ENCODE measurements at regions of chr11 and their contacts with region 1.

Region 1: GRCh38 chr11:14578541-14578956 is 58.4 kb upstream of the PSMA1 start:
- DNase-seq: peak in 8 of 9 donors; percentile 57 to 95 (median 92)
- ATAC-seq: peak; percentile 99
- H3K4me3 ChIP-seq: peak overlapping the region; percentile 22
- H3K4me3 Mint-ChIP-seq: peak overlapping the region; percentile 40 to 85 (median 62)
- H3K27ac ChIP-seq: peak overlapping the region; percentile 79
- H3K27ac Mint-ChIP-seq: peak overlapping the region; percentile 92 to 96 (median 95)
- H3K4me1 ChIP-seq: peaks cover 39 to 41% of the 10 kb centered on the region in 2 donors
- H3K4me1 Mint-ChIP-seq: peaks cover 46 to 71% (median 63%) of the 10 kb centered on the region in 7 donors
- H3K27me3 ChIP-seq: no peaks in the 10 kb centered on the region
- H3K27me3 Mint-ChIP-seq: no peaks in the 10 kb centered on the region

Region 2: GRCh38 chr11:14288189-14288935 is 290.2 kb before region 1 on chr11:
- CTCF ChIA-PET with region 1: no interaction called
- POLR2A ChIA-PET with region 1: no interaction called
- intact Hi-C with region 1: no loop called
- DNase-seq: no peak
- ATAC-seq: no peak
- H3K4me3 ChIP-seq: no peak overlapping the region
- H3K4me3 Mint-ChIP-seq: peak overlapping the region in 2 of 10 donors; percentile 54 to 62
- H3K27ac ChIP-seq: no peak overlapping the region
- H3K27ac Mint-ChIP-seq: peak overlapping the region in 1 of 9 donors; percentile 87
- H3K4me1 ChIP-seq: no peaks in the 10 kb centered on the region
- H3K4me1 Mint-ChIP-seq: peaks cover 0 to 34% (median 2%) of the 10 kb centered on the region in 7 donors
- H3K27me3 ChIP-seq: no peaks in the 10 kb centered on the region
- H3K27me3 Mint-ChIP-seq: no peaks in the 10 kb centered on the region

Region 3: DNA sequence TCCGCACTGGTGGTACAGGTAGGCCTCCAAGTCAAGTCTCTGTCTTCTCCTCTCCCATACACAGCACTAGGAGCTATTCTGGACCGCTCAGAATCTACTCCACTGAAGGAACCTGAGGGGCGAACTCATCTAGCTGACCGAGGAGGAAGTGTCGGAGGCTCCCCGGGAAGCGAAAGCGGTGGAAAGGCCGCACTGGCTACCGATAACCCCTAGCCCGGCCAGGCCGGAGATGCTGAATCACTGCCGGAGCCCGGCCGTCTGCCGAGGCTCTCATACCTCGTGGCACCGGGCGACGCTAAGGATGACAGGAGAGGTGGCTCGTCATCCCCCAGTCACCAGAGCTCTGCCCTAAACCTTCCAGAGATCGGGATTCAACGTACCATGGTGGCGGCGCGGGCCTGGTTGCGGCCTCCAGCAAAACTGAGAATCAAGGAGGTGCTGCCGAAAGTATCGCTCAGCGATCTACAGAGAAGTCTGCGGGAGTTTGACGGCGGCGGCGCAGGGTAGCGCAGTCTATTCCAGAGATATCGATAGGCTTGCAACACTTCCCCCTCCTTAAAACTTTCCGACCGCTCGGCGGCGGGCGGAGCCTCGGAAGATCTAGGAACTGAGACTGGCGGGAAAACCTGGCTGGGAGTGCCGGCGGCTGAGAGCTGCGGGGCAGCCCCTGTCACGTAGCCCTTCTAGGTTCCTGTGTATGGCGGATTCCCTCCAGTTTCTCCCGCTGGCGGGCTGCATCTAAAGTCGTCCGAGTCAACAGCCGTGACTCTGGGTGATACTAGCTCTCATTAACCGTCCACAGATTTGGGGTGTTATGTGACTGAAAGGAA is 58.4 kb before region 1 on chr11 and contains the start of gene PSMA1:
- CTCF ChIA-PET with region 1: no interaction called
- POLR2A ChIA-PET with region 1: interaction called, 6 read pairs
- intact Hi-C with region 1: loop called (anchors 1 kb)
- DNase-seq: peak; percentile 72 to 95 (median 89)
- ATAC-seq: peak; percentile 96
- H3K4me3 ChIP-seq: peak within 1 kb of the TSS; percentile 70
- H3K4me3 Mint-ChIP-seq: peak within 1 kb of the TSS; percentile 86 to 99 (median 97)
- H3K27ac ChIP-seq: peak within 1 kb of the TSS; percentile 96
- H3K27ac Mint-ChIP-seq: peak within 1 kb of the TSS; percentile 93 to 99 (median 96)
- H3K4me1 ChIP-seq: peaks cover 14 to 16% of the 10 kb centered on the region in 2 donors
- H3K4me1 Mint-ChIP-seq: peaks cover 15 to 43% (median 38%) of the 10 kb centered on the region in 7 donors
- H3K27me3 ChIP-seq: no peaks in the 10 kb centered on the region
- H3K27me3 Mint-ChIP-seq: no peaks in the 10 kb centered on the region
- total RNA-seq, gene PSMA1: 103 to 253 (median 120) TPM

Region 4: DNA sequence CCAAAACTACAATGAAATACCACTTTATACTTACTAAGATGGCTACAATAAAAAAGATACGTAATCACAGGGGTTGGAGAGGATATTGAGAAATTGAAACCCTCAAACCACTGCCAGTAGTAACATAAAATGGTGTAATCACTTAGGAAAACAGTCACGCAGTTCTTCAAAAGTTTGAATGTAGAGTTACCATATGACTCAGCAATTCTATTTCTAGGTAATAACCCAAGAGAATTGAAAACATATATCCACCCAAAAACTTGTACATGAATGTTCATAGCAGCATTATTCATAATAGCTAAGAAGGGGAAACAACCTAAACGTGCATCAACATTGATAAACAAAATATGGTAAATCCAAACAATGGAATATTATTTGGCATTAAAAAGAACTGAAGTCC is 33.9 kb before region 1 on chr11:
- CTCF ChIA-PET with region 1: interaction called, 3 read pairs
- POLR2A ChIA-PET with region 1: interaction called, 8 read pairs
- intact Hi-C with region 1: loop called in 1 of 2 experiments (anchors 1 kb)
- DNase-seq: no peak
- ATAC-seq: peak; percentile 54
- H3K4me3 ChIP-seq: no peak overlapping the region
- H3K4me3 Mint-ChIP-seq: peak overlapping the region in 1 of 10 donors; percentile 71
- H3K27ac ChIP-seq: no peak overlapping the region
- H3K27ac Mint-ChIP-seq: peak overlapping the region in 2 of 9 donors; percentile 26 to 84
- H3K4me1 ChIP-seq: peaks cover 0 to 9% of the 10 kb centered on the region in 2 donors
- H3K4me1 Mint-ChIP-seq: peaks cover 13 to 63% (median 32%) of the 10 kb centered on the region in 7 donors
- H3K27me3 ChIP-seq: no peaks in the 10 kb centered on the region
- H3K27me3 Mint-ChIP-seq: no peaks in the 10 kb centered on the region

Region 5: DNA sequence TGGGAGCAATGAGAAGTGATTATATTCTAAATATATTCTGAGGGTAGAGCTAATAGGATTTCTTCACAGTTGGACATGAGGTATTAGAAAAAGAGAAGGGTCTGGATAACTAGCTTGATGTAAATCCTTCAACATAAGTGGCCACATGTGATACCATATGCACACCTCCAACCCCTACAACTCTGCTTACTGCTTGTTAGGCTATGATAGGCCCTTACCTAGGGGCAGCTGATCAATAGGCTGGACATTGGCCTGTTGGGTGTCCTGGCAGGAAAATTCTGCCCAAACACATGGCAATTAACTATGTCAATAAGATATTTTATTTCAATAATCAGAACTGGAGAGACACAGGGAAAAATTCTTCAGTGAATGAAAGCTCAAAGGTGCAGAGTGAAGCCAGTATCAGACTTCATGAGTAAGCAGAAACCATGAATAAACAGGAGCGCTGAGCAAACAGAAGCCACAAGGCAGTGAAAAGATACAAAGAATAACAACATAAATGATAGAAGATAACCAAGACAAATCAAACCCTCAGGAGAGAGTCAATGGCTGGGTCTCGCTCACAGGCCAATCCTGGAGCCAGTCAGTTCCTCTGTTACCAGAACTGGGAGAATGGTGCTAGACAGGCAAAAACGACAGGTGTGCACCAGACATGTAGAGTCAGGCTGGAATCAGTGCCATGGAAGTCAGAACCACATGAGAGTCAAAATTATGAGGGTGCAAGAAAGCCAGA is 12.1 kb before region 1 on chr11:
- CTCF ChIA-PET with region 1: interaction called, 6 read pairs
- POLR2A ChIA-PET with region 1: interaction called, 39 read pairs
- intact Hi-C with region 1: no loop called
- DNase-seq: no peak
- ATAC-seq: no peak
- H3K4me3 ChIP-seq: no peak overlapping the region
- H3K4me3 Mint-ChIP-seq: peak overlapping the region in 3 of 10 donors; percentile 26 to 35 (median 29)
- H3K27ac ChIP-seq: no peak overlapping the region
- H3K27ac Mint-ChIP-seq: peak overlapping the region in 8 of 9 donors; percentile 30 to 77 (median 66)
- H3K4me1 ChIP-seq: peaks cover 15 to 28% of the 10 kb centered on the region in 2 donors
- H3K4me1 Mint-ChIP-seq: peaks cover 37 to 83% (median 71%) of the 10 kb centered on the region in 7 donors
- H3K27me3 ChIP-seq: no peaks in the 10 kb centered on the region
- H3K27me3 Mint-ChIP-seq: no peaks in the 10 kb centered on the region

Region 6: DNA sequence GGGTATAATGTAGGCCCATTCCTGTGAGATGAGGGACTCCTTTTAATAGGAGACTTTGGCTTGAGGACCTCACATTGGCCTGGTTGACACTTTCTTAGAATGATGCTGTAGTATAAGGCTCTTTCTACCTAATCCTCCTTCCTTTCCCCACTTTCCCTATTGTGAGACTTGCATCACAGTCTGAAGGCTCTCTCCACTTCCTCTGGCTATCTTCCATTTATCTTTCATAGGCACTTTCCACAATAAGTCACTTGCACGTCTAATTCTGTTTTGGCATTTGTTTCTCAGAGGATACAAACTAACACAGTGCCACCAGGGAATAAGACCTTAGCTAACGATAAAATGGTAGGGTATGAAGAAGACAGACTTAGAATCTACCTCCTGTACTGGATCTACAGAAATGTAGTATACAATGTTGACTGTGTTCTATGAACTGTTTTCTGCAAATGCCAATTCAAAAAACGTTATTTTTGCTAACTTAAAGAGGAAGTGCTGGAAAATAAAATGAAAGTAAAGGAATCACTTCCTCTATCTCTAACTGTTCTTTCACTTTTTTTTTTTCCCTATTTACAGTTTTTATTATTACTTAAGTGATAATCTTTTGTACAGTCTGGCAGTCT is 47.1 kb after region 1 on chr11:
- CTCF ChIA-PET with region 1: interaction called, 3 read pairs
- POLR2A ChIA-PET with region 1: interaction called, 14 read pairs
- intact Hi-C with region 1: no loop called
- DNase-seq: no peak
- ATAC-seq: peak; percentile 24
- H3K4me3 ChIP-seq: no peak overlapping the region
- H3K4me3 Mint-ChIP-seq: peak overlapping the region; percentile 1 to 75 (median 52)
- H3K27ac ChIP-seq: no peak overlapping the region
- H3K27ac Mint-ChIP-seq: peak overlapping the region; percentile 1 to 86 (median 71)
- H3K4me1 ChIP-seq: peaks cover 4 to 27% of the 10 kb centered on the region in 2 donors
- H3K4me1 Mint-ChIP-seq: peaks cover 26 to 69% (median 64%) of the 10 kb centered on the region in 7 donors
- H3K27me3 ChIP-seq: no peaks in the 10 kb centered on the region
- H3K27me3 Mint-ChIP-seq: no peaks in the 10 kb centered on the region

Region 7: GRCh38 chr11:14643697-14644225 is 65.2 kb after region 1 on chr11 and contains the start of gene PDE3B:
- CTCF ChIA-PET with region 1: interaction called, 17 read pairs
- POLR2A ChIA-PET with region 1: interaction called, 67 read pairs
- intact Hi-C with region 1: loop called (anchors 1 kb)
- DNase-seq: peak; percentile 45 to 79 (median 61)
- ATAC-seq: peak; percentile 78
- H3K4me3 ChIP-seq: peak within 1 kb of the TSS; percentile 68
- H3K4me3 Mint-ChIP-seq: peak within 1 kb of the TSS; percentile 90 to 99 (median 94)
- H3K27ac ChIP-seq: peak within 1 kb of the TSS; percentile 89
- H3K27ac Mint-ChIP-seq: peak within 1 kb of the TSS; percentile 69 to 95 (median 92)
- H3K4me1 ChIP-seq: peaks cover 26 to 33% of the 10 kb centered on the region in 2 donors
- H3K4me1 Mint-ChIP-seq: peaks cover 22 to 65% (median 49%) of the 10 kb centered on the region in 7 donors
- H3K27me3 ChIP-seq: no peaks in the 10 kb centered on the region
- H3K27me3 Mint-ChIP-seq: no peaks in the 10 kb centered on the region
- total RNA-seq, gene PDE3B: 79.6 to 268 (median 151) TPM